ENCODE measurements at regions of chr3 and their contacts with region 1.

Region 1: GRCh38 chr3:144128108-144128892 is 156.7 kb downstream of the DIPK2A start:
- DNase-seq: no peak
- H3K4me3 ChIP-seq: no peak overlapping the region
- H3K27ac ChIP-seq: peak overlapping the region; percentile 37 to 64
- H3K4me1 ChIP-seq: no peaks in the 10 kb centered on the region
- H3K27me3 ChIP-seq: no peaks in the 10 kb centered on the region
- CTCF ChIP-seq: no peak
- POLR2A ChIP-seq: no peak

Region 2: DNA sequence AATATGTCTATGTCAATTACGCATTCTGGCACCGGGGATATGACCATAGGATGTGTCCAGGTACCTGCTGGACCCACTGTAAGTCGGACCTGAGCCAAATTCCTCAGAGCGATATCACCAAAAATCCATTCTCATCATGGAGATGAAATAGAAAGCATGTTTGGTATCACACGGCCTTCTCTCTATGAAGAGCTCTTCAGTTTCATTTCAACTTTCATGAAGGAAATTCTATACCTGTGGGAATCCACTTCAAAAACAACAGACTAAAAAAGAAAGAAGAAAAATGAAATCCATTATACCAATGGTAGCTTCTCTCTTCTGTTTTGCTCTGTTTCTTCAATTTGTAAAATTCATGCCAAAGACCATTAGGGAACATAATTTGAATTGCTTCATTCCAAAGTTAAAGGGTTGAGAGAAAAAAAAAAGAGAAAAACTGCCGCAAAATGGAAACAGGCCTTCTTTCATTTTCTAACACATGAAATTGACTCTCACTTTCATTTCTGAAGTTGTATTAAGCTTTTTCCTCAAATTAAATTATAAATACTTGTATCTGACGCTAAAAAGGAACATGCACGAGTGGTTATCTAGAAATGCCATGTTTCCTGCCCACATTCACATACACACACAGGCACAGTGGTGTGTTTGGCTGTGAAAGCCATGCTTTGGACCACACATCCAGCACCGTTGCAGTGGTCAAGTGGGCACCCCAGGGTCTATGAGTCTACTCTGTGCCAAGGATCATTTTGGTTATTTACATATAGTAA is 203.6 kb before region 1 on chr3:
- intact Hi-C with region 1: no loop called
- DNase-seq: no peak
- H3K4me3 ChIP-seq: no peak overlapping the region
- H3K27ac ChIP-seq: no peak overlapping the region
- H3K4me1 ChIP-seq: no peaks in the 10 kb centered on the region
- H3K27me3 ChIP-seq: no peaks in the 10 kb centered on the region
- CTCF ChIP-seq: no peak
- POLR2A ChIP-seq: no peak

Region 3: DNA sequence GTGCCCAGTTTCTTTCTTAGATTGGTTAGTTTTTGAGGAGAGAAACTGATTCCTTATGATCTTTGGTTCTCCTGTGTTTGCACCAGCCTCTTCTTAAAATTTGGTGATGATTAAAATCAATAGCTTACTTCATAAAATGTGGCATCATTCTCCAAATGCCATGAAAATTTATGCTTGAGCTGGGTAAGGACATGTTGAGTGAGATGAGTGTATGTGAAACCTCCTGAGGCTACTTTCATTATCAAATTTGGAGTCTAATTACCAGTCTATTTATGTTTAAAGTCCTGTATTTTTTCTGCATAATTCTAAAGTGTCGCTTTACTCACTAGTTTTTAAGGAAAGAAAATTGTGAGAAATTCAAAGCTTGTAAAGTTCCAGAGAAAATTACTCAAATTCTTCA is 54.6 kb before region 1 on chr3:
- intact Hi-C with region 1: loop called (anchors 2 kb)
- DNase-seq: no peak
- H3K4me3 ChIP-seq: no peak overlapping the region
- H3K27ac ChIP-seq: no peak overlapping the region
- H3K4me1 ChIP-seq: no peaks in the 10 kb centered on the region
- H3K27me3 ChIP-seq: no peaks in the 10 kb centered on the region
- CTCF ChIP-seq: no peak
- POLR2A ChIP-seq: no peak